CD8-positive, alpha-beta T cell (primary cell): ENCODE measurements at regions of chrX and their contacts with region 1.

Region 1: DNA sequence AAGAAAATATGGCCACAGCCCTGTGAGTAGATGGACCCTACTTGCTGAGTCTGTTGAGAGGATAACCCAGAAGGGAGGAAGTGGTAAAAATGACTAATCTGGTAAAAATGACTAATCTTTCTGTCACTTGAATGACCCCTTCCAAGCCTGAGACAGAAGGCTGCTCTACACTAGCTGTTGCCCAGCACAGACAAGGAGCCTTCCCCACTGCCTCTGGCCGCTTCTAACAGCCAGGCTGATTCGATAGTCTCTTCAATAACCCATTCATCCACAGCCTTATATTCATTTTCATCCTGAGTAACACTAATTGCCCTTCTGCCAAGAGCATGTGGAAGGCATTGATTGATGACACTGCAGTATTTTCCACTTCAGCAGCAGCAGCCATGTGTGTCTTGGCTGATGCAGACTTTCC is 18.4 kb downstream of the MAGEB17 start:
- DNase-seq: peak in 1 of 9 experiments; percentile 6
- ATAC-seq: no peak
- H3K4me3 ChIP-seq: no peak overlapping the region
- H3K4me3 Mint-ChIP-seq: no peak overlapping the region
- H3K27ac ChIP-seq: no peak overlapping the region
- H3K27ac Mint-ChIP-seq: no peak overlapping the region
- H3K4me1 ChIP-seq: no peaks in the 10 kb centered on the region
- H3K4me1 Mint-ChIP-seq: no peaks in the 10 kb centered on the region
- H3K27me3 ChIP-seq: no peaks in the 10 kb centered on the region
- H3K27me3 Mint-ChIP-seq: no peaks in the 10 kb centered on the region
- CTCF ChIP-seq: no peak

Region 2: GRCh38 chrX:16196829-16197228 is 11.1 kb after region 1 on chrX:
- CTCF ChIA-PET with region 1: no interaction called
- POLR2A ChIA-PET with region 1: no interaction called
- intact Hi-C with region 1: loop called in 1 of 2 experiments (anchors 1 kb)
- DNase-seq: no peak
- ATAC-seq: no peak
- H3K4me3 ChIP-seq: no peak overlapping the region
- H3K4me3 Mint-ChIP-seq: no peak overlapping the region
- H3K27ac ChIP-seq: no peak overlapping the region
- H3K27ac Mint-ChIP-seq: no peak overlapping the region
- H3K4me1 ChIP-seq: no peaks in the 10 kb centered on the region
- H3K4me1 Mint-ChIP-seq: no peaks in the 10 kb centered on the region
- H3K27me3 ChIP-seq: no peaks in the 10 kb centered on the region
- H3K27me3 Mint-ChIP-seq: peaks cover 8% of the 10 kb centered on the region
- CTCF ChIP-seq: no peak